HEK293 (cell line): ENCODE measurements at regions of chr10 and their contacts with region 1.

Region 1: GRCh38 chr10:69914398-69915214 is 112.9 kb downstream of the COL13A1 start:
- H3K4me3 ChIP-seq: no peak overlapping the region
- H3K27ac ChIP-seq: no peak overlapping the region
- H3K4me1 ChIP-seq: peaks cover 2% of the 10 kb centered on the region; the same call in 1 of the 2 replicates
- CTCF ChIP-seq: peak; percentile 73

Region 2: GRCh38 chr10:69600761-69601330 is 313.8 kb before region 1 on chr10:
- CTCF ChIA-PET with region 1: no interaction called
- POLR2A ChIA-PET with region 1: no interaction called
- H3K4me3 ChIP-seq: no peak overlapping the region
- H3K27ac ChIP-seq: no peak overlapping the region
- H3K4me1 ChIP-seq: no peaks in the 10 kb centered on the region
- CTCF ChIP-seq: no peak

Region 3: DNA sequence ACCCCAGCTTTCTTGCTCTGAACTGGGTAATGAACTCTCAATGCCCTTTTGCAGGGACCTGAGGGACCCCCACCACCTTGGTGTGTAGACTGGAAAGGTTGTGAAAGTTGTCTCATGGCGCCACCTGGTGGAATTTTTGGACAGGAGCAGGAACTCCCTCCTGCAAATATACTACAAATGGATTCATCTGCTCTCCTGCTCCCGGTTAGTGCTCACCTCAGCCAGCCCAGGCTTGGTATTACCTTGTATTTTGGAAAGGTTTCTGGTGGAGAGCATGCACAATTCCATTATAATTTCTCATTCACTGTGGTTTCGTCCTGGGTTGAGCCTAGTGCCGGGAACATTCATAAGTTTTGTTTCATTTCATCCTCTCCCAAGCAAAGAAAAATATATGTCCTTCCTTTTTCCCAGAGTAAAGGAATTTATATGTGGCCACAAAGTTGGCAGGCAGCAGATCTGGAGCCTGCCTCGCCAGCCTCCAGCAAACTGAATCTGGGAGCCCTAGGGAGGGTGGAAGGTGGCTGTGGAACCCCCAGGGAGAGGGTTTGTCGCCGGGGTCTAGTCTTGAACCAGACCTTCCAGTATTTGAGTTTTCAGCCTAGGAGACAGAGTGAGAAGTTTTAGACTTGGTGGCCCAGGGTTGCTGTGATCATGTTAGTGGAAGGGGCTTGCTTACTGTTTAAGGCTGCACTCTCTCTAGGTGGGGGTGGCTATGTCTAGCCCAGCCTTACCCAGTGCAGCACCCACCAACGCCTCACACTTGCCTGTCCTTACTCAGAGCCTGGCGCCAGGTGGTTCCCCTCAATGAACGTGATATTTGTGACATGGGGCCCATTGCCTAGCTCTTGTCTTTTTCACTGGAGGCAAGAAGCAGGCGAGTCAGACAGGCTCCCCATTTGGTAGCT is 275.1 kb before region 1 on chr10:
- CTCF ChIA-PET with region 1: interaction called, 36 read pairs
- POLR2A ChIA-PET with region 1: no interaction called
- H3K4me3 ChIP-seq: no peak overlapping the region
- H3K27ac ChIP-seq: no peak overlapping the region
- H3K4me1 ChIP-seq: no peaks in the 10 kb centered on the region
- CTCF ChIP-seq: peak; percentile 66

Region 4: GRCh38 chr10:69733791-69734261 is 180.8 kb before region 1 on chr10:
- CTCF ChIA-PET with region 1: interaction called, 13 read pairs
- POLR2A ChIA-PET with region 1: no interaction called
- H3K4me3 ChIP-seq: no peak overlapping the region
- H3K27ac ChIP-seq: no peak overlapping the region
- H3K4me1 ChIP-seq: no peaks in the 10 kb centered on the region
- CTCF ChIP-seq: no peak

Region 5: DNA sequence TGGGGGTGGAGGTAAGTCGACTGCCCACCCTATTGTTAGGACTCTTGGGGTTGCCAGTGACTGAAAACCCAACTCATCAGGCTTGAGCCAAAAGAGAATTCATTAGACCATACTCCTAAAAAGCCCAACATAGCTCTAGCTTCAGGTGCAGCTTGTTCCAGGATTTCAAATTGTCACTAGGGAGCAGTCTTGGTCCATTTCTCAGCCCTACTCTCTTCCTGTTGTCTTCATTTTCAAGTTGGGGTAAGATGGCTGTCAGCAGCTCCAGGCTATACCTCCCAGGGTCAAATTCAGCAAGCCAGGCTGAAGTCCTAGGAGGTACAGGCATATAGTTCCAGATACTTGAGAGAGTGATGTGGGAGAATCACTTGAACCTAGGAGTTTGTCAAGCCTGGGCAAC is 127.8 kb before region 1 on chr10:
- CTCF ChIA-PET with region 1: interaction called, 114 read pairs
- POLR2A ChIA-PET with region 1: no interaction called
- H3K4me3 ChIP-seq: no peak overlapping the region
- H3K27ac ChIP-seq: no peak overlapping the region
- H3K4me1 ChIP-seq: no peaks in the 10 kb centered on the region
- CTCF ChIP-seq: no peak

Region 6: DNA sequence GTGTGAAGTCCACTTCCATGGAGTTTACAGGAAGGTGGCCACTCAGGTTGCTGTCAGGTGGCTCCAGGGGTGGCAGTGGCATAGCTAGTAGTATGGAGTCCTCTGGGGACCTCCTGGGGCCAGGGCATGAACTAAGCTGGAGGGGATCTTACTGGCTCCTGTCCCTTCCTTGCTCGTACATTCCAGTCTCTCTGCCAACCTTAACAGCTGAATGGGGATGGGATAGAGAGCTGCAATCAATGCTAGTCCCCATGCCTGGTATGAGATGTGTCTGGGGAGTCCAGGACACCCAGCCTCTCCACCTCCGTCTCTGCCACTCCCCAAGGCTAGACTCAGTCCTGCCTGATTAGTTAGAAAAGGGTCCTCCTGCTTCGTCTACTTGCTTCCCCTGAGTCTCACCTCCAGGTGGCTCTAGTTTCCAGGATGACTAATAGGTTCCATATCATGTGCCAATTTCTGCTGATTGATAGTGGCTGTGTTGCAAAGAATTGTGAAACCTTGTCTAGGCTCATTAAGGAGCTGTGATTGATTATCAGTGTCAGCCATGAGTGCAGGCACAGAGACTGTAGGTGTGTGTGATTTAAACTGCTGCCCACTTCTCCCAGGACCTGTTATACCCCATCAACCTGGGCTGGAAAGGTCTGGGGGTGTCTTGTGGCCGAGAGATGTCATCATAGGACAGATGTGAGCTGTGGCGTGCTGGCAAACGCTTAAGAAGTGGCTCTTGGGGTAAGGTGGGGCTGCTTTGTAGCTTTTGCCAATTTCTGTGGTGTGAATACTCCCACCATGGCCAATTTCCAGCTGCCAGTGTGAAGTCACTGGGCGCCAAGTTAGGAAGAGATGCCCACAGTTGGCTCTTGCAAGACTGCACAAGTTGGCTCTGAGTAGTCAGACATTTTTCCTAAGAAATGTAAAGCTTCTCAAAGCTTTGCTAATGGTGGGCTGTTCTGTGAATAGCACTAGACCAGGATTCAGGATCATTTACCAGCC is 53.1 kb before region 1 on chr10:
- CTCF ChIA-PET with region 1: interaction called, 15 read pairs
- POLR2A ChIA-PET with region 1: no interaction called
- H3K4me3 ChIP-seq: no peak overlapping the region
- H3K27ac ChIP-seq: no peak overlapping the region
- H3K4me1 ChIP-seq: no peaks in the 10 kb centered on the region
- CTCF ChIP-seq: no peak; the same call in 1 of the 2 replicates

Region 7: GRCh38 chr10:69901628-69902505 is 12.7 kb before region 1 on chr10:
- CTCF ChIA-PET with region 1: interaction called, 59 read pairs
- POLR2A ChIA-PET with region 1: interaction called, 7 read pairs
- H3K4me3 ChIP-seq: no peak overlapping the region
- H3K27ac ChIP-seq: no peak overlapping the region
- H3K4me1 ChIP-seq: no peaks in the 10 kb centered on the region
- CTCF ChIP-seq: peak; percentile 76

Region 8: GRCh38 chr10:69936091-69936490 is 21.5 kb after region 1 on chr10:
- CTCF ChIA-PET with region 1: interaction called, 11 read pairs
- POLR2A ChIA-PET with region 1: no interaction called
- H3K4me3 ChIP-seq: no peak overlapping the region
- H3K27ac ChIP-seq: no peak overlapping the region
- H3K4me1 ChIP-seq: no peaks in the 10 kb centered on the region
- CTCF ChIP-seq: no peak

Region 9: GRCh38 chr10:70052462-70053217 is 138.0 kb after region 1 on chr10 and contains the start of gene MACROH2A2:
- CTCF ChIA-PET with region 1: no interaction called
- POLR2A ChIA-PET with region 1: no interaction called
- H3K4me3 ChIP-seq: peak within 1 kb of the TSS; percentile 56
- H3K27ac ChIP-seq: peak within 1 kb of the TSS; percentile 89
- H3K4me1 ChIP-seq: peaks cover 15% of the 10 kb centered on the region
- CTCF ChIP-seq: peak; percentile 80